Transverse colon (tissue), 4 donors: ENCODE measurements at regions of chr5 and their contacts with region 1.

Region 1: DNA sequence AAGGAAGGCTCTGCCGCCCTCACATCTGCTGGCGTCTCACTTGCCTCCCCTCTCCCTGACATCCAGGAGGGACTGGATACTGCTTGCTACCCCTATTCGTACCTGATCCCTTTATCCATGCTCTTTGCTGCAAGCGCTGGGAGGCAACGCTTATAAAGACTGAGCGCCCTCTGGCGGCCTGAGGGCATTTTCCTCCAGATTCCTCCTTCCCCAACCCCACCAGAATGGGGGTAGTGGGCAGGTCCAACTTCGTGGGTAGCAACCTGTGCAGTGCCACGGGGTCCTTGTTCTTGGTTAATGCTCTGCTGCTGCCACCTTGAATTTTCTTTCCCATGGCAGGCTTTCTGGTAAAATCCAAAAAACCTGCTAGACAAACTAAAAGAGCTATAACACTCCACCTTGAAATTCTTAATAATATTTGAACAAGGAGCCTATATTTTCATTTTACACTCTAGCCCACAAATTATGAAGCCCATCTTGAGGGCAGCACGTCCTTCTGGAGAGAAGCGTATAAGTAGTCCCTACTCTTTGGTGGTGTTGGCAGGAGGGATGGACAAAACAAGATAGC is 52.4 kb downstream of the JADE2 start:
- DNase-seq: peak; percentile 84
- H3K4me3 ChIP-seq: no peak overlapping the region
- H3K27ac ChIP-seq: no peak overlapping the region
- H3K4me1 ChIP-seq: peaks cover 0 to 7% (median 2%) of the 10 kb centered on the region in 4 donors
- H3K27me3 ChIP-seq: no peaks in the 10 kb centered on the region
- CTCF ChIP-seq: peak; percentile 72 to 84 (median 83)
- EP300 ChIP-seq: no peak
- POLR2A ChIP-seq: no peak

Region 2: GRCh38 chr5:134184155-134185135 is 393.4 kb before region 1 on chr5:
- in situ Hi-C with region 1: loop called in 3 of 4 experiments (anchors 10 to 25 kb)
- intact Hi-C with region 1: loop called (anchors 5 kb)
- DNase-seq: peak; percentile 79
- H3K4me3 ChIP-seq: no peak overlapping the region
- H3K27ac ChIP-seq: no peak overlapping the region
- H3K4me1 ChIP-seq: no peaks in the 10 kb centered on the region
- H3K27me3 ChIP-seq: no peaks in the 10 kb centered on the region
- CTCF ChIP-seq: peak; percentile 87 to 92 (median 90)
- EP300 ChIP-seq: no peak
- POLR2A ChIP-seq: no peak

Region 3: DNA sequence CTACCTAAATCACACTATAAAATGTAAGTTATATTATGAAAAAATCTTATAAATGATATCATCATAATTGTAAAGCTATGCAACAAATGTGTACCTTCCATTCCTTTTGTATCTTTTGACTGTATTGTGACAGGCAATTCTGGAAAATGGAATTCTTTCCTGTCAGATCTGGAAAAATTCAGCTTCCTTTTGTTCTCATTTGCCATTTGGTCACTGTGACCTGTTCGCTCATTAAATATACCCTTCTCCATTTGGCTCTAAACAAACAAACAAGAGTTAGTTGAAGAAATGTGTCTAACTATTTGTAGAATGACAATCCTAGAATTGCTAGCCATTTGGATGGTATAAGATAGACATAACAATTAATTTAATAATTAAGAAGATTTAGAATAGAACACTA is 273.6 kb before region 1 on chr5:
- in situ Hi-C with region 1: loop called (anchors 5 to 10 kb)
- intact Hi-C with region 1: no loop called
- DNase-seq: no peak
- H3K4me3 ChIP-seq: no peak overlapping the region
- H3K27ac ChIP-seq: no peak overlapping the region
- H3K4me1 ChIP-seq: peaks cover 0 to 5% (median 2%) of the 10 kb centered on the region in 4 donors
- H3K27me3 ChIP-seq: no peaks in the 10 kb centered on the region
- CTCF ChIP-seq: no peak
- EP300 ChIP-seq: no peak
- POLR2A ChIP-seq: no peak

Region 4: DNA sequence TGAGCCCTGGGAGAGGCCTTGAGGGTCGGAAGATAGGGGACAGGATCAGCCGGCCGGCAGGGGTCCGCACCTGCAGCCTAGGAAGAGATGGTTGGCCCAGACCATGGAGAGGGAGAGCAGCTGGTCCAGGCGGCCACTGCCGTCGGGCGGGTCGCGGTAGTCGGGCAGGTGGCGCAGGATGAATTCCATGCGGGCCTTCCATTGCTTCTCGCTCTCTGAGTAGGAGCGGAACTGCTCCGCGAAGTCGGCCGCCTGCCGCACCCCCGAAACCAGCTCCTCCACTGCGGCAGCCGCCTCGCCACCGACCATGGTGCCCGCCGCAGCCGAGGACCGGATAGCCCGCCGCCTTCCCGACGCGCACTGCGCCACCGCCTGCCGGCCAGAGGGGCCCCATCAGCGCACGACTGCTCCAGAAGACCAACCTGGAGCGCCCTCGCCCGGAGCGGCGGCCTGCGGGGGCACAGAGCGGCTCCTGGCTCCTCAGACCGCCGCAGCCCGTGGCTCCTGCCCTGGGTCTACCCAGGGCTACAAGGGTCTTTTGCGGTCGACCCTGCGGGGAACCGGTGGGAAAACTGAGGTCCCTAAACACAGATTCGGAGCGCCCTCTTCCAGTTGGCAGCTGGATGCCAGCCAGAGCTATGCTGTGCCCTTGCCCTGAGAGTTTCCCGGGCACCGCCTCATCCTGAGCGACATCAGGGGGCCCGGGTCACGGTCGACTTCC is 166.2 kb before region 1 on chr5 and contains the start of gene CDKN2AIPNL:
- in situ Hi-C with region 1: loop called in 2 of 4 experiments (anchors 5 to 25 kb)
- intact Hi-C with region 1: loop called (anchors 5 kb)
- DNase-seq: peak; percentile 94
- H3K4me3 ChIP-seq: peak within 1 kb of the TSS; percentile 47 to 88 (median 76)
- H3K27ac ChIP-seq: peak within 1 kb of the TSS; percentile 79 to 90 (median 86)
- H3K4me1 ChIP-seq: peaks cover 10 to 47% (median 33%) of the 10 kb centered on the region in 4 donors
- H3K27me3 ChIP-seq: no peaks in the 10 kb centered on the region
- CTCF ChIP-seq: peak; percentile 65 to 93 (median 72)
- EP300 ChIP-seq: no peak
- POLR2A ChIP-seq: peak; percentile 76
- total RNA-seq, gene CDKN2AIPNL: 3.2 to 18.7 (median 12.9) TPM in 3 of 4 donors, not detected in the other

Region 5: GRCh38 chr5:134527146-134527960 is 50.5 kb before region 1 on chr5:
- in situ Hi-C with region 1: no loop called
- intact Hi-C with region 1: loop called (anchors 5 kb)
- DNase-seq: peak; percentile 81
- H3K4me3 ChIP-seq: peak overlapping the region; percentile 66 to 86 (median 84)
- H3K27ac ChIP-seq: peak overlapping the region; percentile 94 to 99 (median 98)
- H3K4me1 ChIP-seq: peaks cover 16 to 53% (median 40%) of the 10 kb centered on the region in 4 donors
- H3K27me3 ChIP-seq: no peaks in the 10 kb centered on the region
- CTCF ChIP-seq: peak; percentile 95 to 97 (median 96)
- EP300 ChIP-seq: no peak
- POLR2A ChIP-seq: peak; percentile 22